ENCODE measurements at regions of chr19 and their contacts with region 1.

Region 1: DNA sequence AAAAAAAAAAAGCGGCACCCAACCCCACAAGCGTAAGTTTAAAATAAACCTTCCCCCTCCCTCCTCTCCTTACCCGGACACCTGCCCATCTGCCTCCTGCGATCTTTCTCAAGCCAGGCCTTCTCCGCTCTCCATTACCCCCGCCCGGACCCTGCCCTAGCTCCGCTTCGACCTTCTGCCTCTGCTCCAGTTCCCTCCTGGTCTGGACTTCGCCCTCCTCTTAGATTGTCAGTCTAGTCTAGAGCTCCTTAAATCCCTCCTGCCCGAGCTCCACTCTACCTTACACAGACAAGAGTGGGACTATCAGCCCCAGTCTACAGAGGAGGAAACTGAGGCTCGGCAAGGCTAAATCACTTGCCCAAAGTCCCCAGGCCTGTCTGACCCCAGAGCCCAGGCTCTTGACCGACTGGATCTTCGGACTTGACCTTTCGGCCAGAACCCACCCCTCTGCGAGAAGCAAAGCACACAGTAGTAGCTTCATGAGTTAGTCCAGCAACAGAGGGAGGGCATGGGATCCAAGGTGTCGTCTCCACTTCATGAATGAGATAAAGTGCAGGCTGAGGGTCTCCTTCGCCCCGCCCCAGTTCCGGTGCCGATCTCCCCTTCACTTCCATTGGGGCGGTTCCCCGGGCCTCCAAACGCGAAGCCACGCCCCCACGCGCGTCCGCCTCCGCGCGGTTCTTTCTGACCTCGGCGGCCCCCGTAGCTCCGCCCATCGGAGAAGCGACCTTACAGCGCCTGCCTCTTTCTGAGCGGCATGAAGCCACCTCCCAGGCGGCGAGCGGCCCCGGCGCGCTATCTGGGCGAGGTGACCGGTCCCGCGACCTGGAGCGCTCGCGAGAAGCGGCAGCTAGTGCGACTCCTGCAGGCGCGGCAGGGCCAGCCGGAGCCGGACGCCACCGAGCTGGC is at the start of gene SNAPC2:
- DNase-seq: peak; percentile 98
- ATAC-seq: peak; percentile 79
- H3K4me3 Mint-ChIP-seq: peak within 1 kb of the TSS; percentile 96
- H3K27ac Mint-ChIP-seq: peak within 1 kb of the TSS; percentile 94
- H3K4me1 Mint-ChIP-seq: peaks cover 47% of the 10 kb centered on the region
- H3K27me3 Mint-ChIP-seq: peaks cover 30% of the 10 kb centered on the region
- total RNA-seq, gene SNAPC2: 18.6 to 19.0 TPM

Region 2: GRCh38 chr19:7888145-7888825 is 31.6 kb before region 1 on chr19 and contains the start of gene LRRC8E:
- CTCF ChIA-PET with region 1: no interaction called
- POLR2A ChIA-PET with region 1: no interaction called
- DNase-seq: no peak
- ATAC-seq: peak; percentile 80
- H3K4me3 Mint-ChIP-seq: no peak within 1 kb of the TSS
- H3K27ac Mint-ChIP-seq: no peak within 1 kb of the TSS
- H3K4me1 Mint-ChIP-seq: no peaks in the 10 kb centered on the region
- H3K27me3 Mint-ChIP-seq: peaks cover 16% of the 10 kb centered on the region
- total RNA-seq, gene LRRC8E: not detected

Region 3: GRCh38 chr19:7903244-7904073 is 16.4 kb before region 1 on chr19 and contains the start of gene MAP2K7:
- CTCF ChIA-PET with region 1: interaction called, 22 read pairs
- POLR2A ChIA-PET with region 1: interaction called, 9 read pairs
- DNase-seq: peak; percentile 100
- ATAC-seq: peak; percentile 86
- H3K4me3 Mint-ChIP-seq: peak within 1 kb of the TSS; percentile 85
- H3K27ac Mint-ChIP-seq: peak within 1 kb of the TSS; percentile 95
- H3K4me1 Mint-ChIP-seq: peaks cover 26% of the 10 kb centered on the region
- H3K27me3 Mint-ChIP-seq: no peaks in the 10 kb centered on the region
- total RNA-seq, gene MAP2K7: 36.5 to 39.9 TPM